WTC11 (cell line): ENCODE measurements at regions of chr6 and their contacts with region 1.

Region 1: GRCh38 chr6:159252955-159253508 is 83.8 kb downstream of the FNDC1 start:
- DNase-seq: peak; percentile 25
- ATAC-seq: peak; percentile 97
- H3K4me3 Mint-ChIP-seq: no peak overlapping the region
- H3K27ac Mint-ChIP-seq: no peak overlapping the region
- H3K4me1 Mint-ChIP-seq: peaks cover 4% of the 10 kb centered on the region
- H3K27me3 Mint-ChIP-seq: peaks cover 11% of the 10 kb centered on the region
- CTCF ChIP-seq: peak; percentile 61

Region 2: DNA sequence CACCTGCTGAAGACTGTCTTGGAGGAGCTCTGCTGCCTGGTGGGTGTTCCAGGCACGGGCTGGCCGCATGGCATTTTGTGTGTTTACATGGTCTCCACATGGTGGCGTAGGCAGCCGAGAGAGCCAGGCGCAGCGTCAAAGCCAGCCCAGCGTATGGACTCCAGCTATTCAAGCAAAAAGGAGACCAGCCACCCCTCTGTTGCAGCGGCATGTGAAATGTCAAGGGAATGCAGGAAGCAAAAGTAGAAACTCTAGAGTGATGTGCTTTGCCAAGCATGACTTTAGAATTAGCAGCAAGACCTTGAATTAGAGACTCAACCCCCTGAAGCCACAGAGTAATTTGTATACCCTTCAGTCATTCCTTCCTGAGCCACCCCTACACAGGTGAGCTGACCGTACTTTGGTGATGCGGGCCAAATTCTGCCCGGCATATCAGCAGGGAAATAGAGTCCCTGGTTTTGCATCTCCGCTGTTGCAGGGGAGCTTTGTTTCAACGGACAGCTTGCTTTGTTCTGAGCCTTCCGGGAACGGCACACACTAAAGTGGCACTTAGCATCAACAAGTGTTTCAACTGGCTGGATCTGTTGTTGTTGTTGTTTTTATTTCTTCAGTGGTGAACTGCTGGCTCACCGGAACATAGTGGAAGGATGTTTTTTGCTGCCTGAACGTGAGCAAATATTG is 35.3 kb before region 1 on chr6:
- CTCF ChIA-PET with region 1: interaction called, 25 read pairs
- POLR2A ChIA-PET with region 1: no interaction called
- DNase-seq: peak; percentile 80
- ATAC-seq: peak; percentile 94
- H3K4me3 Mint-ChIP-seq: no peak overlapping the region
- H3K27ac Mint-ChIP-seq: peak overlapping the region; percentile 21; the same call in 1 of the 2 replicates
- H3K4me1 Mint-ChIP-seq: peaks cover 23% of the 10 kb centered on the region
- H3K27me3 Mint-ChIP-seq: no peaks in the 10 kb centered on the region
- CTCF ChIP-seq: 0 out of 2 replicates have a peak, but pooled peaks have one; percentile 14

Region 3: GRCh38 chr6:159238920-159239558 is 14.0 kb before region 1 on chr6:
- CTCF ChIA-PET with region 1: interaction called, 23 read pairs
- POLR2A ChIA-PET with region 1: no interaction called
- DNase-seq: no peak
- ATAC-seq: no peak
- H3K4me3 Mint-ChIP-seq: no peak overlapping the region
- H3K27ac Mint-ChIP-seq: no peak overlapping the region
- H3K4me1 Mint-ChIP-seq: no peaks in the 10 kb centered on the region
- H3K27me3 Mint-ChIP-seq: peaks cover 21% of the 10 kb centered on the region
- CTCF ChIP-seq: no peak

Region 4: DNA sequence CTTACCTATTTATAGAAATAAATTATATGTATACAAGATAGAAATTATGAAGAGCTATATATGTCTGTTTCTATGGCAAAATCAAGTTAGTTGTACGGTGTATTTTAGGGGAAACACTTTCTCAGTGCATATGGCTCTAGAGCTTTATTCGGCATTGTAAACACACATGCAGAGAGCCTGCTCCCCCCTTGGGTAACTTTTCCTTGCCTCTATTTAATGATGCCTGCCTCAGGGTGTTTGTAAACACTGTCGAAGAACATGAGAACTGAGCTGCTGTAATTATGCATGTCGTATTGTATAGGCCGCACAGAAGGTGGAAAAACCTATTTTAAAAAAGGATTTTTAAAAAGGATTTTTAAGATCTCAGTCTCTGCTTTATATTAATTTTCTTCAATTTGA is 49.6 kb after region 1 on chr6:
- CTCF ChIA-PET with region 1: interaction called, 16 read pairs
- POLR2A ChIA-PET with region 1: no interaction called
- DNase-seq: no peak
- ATAC-seq: no peak
- H3K4me3 Mint-ChIP-seq: no peak overlapping the region
- H3K27ac Mint-ChIP-seq: no peak overlapping the region
- H3K4me1 Mint-ChIP-seq: peaks cover 10% of the 10 kb centered on the region; the same call in 1 of the 2 replicates
- H3K27me3 Mint-ChIP-seq: peaks cover 11% of the 10 kb centered on the region; the same call in 1 of the 2 replicates
- CTCF ChIP-seq: no peak

Region 5: DNA sequence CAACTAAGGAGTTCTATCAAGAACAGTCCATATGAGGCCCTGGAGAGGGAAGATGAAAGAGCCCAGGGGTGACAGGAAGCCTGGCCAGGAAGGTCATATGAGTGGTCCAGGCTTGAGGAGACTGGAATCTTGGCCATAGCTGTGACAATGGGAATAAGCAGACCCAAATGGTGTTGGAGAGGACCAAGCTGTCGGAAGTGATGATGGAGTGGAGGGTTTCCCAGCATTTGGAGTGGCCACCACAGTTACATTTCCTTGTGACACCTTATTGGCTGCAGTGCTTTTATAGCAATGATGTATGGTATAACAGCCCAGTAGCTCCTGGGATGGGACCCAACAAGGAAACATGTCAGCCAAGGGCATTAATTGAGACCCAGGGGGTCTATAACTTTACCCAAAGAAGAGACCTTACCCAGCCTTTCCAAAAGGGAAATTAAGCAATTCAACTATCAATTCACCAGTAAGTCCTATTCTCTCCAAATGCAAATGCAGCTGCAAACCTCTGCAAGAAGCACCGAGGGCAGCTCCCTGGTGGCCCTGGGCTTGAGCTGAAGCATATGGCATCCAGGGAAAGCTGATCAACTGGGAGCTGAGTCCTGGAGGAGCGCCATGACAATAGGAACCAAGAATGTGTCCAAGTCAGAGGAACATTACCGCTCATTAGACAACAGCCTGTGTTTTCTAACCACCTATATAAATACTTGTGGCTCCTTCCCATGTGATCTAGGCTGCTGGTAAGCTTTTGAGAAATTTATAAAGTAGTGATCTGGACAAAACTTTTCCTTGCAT is 220.6 kb after region 1 on chr6:
- CTCF ChIA-PET with region 1: no interaction called
- POLR2A ChIA-PET with region 1: no interaction called
- DNase-seq: no peak
- ATAC-seq: no peak
- H3K4me3 Mint-ChIP-seq: no peak overlapping the region
- H3K27ac Mint-ChIP-seq: no peak overlapping the region
- H3K4me1 Mint-ChIP-seq: no peaks in the 10 kb centered on the region
- H3K27me3 Mint-ChIP-seq: peaks cover 5% of the 10 kb centered on the region
- CTCF ChIP-seq: no peak

Region 6: GRCh38 chr6:159646733-159647132 is 393.7 kb after region 1 on chr6:
- CTCF ChIA-PET with region 1: no interaction called
- POLR2A ChIA-PET with region 1: no interaction called
- DNase-seq: no peak
- ATAC-seq: no peak
- H3K4me3 Mint-ChIP-seq: no peak overlapping the region
- H3K27ac Mint-ChIP-seq: no peak overlapping the region
- H3K4me1 Mint-ChIP-seq: no peaks in the 10 kb centered on the region
- H3K27me3 Mint-ChIP-seq: no peaks in the 10 kb centered on the region
- CTCF ChIP-seq: no peak